ENCODE measurements at regions of chr6 and their contacts with region 1.

Region 1: DNA sequence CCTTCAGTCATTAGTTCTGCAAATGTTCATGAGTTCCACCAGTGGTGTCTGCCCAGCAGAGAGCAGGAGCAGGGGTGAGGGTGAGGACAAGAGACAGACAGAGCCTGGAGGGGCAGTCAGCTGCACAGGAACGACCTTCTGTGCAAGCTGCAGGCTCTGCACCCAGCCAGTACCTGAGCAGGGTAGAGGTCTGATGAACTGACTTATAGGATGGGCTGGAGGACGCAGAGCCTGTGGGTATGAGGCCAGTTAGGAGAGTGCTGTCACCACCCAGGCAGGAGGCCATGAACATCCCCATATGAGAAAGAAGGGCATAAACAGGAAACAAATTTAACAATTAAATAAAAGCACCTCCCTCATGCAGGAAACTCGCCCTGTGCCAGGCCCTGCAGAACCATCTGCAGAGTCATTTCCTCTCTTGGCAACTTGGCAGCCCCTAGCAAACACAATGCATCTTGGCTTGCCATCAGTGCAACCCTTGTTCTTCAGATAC is 17.9 kb downstream of the C6orf15 start:
- DNase-seq: peak in 8 of 9 experiments; percentile 40 to 82 (median 56)
- ATAC-seq: peak; percentile 85
- H3K4me3 ChIP-seq: peak overlapping the region; percentile 5 to 34
- H3K4me3 Mint-ChIP-seq: peak overlapping the region; percentile 72
- H3K27ac ChIP-seq: peak overlapping the region; percentile 49 to 64
- H3K27ac Mint-ChIP-seq: peak overlapping the region; percentile 98
- H3K4me1 ChIP-seq: peaks cover 42% of the 10 kb centered on the region
- H3K4me1 Mint-ChIP-seq: peaks cover 46% of the 10 kb centered on the region
- H3K27me3 ChIP-seq: no peaks in the 10 kb centered on the region
- H3K27me3 Mint-ChIP-seq: no peaks in the 10 kb centered on the region
- CTCF ChIP-seq: no peak

Region 2: GRCh38 chr6:30914076-30914853 is 180.2 kb before region 1 on chr6 and contains the start of gene VARS2:
- CTCF ChIA-PET with region 1: interaction called, 18 read pairs
- POLR2A ChIA-PET with region 1: no interaction called
- intact Hi-C with region 1: no loop called
- DNase-seq: peak; percentile 66 to 92 (median 82)
- ATAC-seq: peak; percentile 96
- H3K4me3 ChIP-seq: peak within 1 kb of the TSS; percentile 61 to 92
- H3K4me3 Mint-ChIP-seq: peak within 1 kb of the TSS; percentile 93
- H3K27ac ChIP-seq: peak within 1 kb of the TSS; percentile 48 to 65
- H3K27ac Mint-ChIP-seq: peak within 1 kb of the TSS; percentile 88
- H3K4me1 ChIP-seq: peaks cover 15% of the 10 kb centered on the region
- H3K4me1 Mint-ChIP-seq: peaks cover 29% of the 10 kb centered on the region
- H3K27me3 ChIP-seq: no peaks in the 10 kb centered on the region
- H3K27me3 Mint-ChIP-seq: no peaks in the 10 kb centered on the region
- CTCF ChIP-seq: no peak
- total RNA-seq, gene VARS2: 19.5 to 20.6 TPM

Region 3: GRCh38 chr6:30990422-30991086 is 103.9 kb before region 1 on chr6:
- CTCF ChIA-PET with region 1: no interaction called
- POLR2A ChIA-PET with region 1: no interaction called
- intact Hi-C with region 1: no loop called
- DNase-seq: peak in 3 of 9 experiments; percentile 16 to 58 (median 32)
- ATAC-seq: peak; percentile 73
- H3K4me3 ChIP-seq: peak overlapping the region; percentile 13 to 18
- H3K4me3 Mint-ChIP-seq: peak overlapping the region; percentile 76
- H3K27ac ChIP-seq: no peak overlapping the region
- H3K27ac Mint-ChIP-seq: no peak overlapping the region
- H3K4me1 ChIP-seq: no peaks in the 10 kb centered on the region
- H3K4me1 Mint-ChIP-seq: peaks cover 10% of the 10 kb centered on the region
- H3K27me3 ChIP-seq: no peaks in the 10 kb centered on the region
- H3K27me3 Mint-ChIP-seq: no peaks in the 10 kb centered on the region
- CTCF ChIP-seq: no peak

Region 4: GRCh38 chr6:31114970-31115849 is 20.8 kb after region 1 on chr6:
- CTCF ChIA-PET with region 1: interaction called, 16 read pairs
- POLR2A ChIA-PET with region 1: interaction called, 3 read pairs
- intact Hi-C with region 1: no loop called
- DNase-seq: peak in 1 of 9 experiments; percentile 46
- ATAC-seq: peak; percentile 29
- H3K4me3 ChIP-seq: no peak overlapping the region
- H3K4me3 Mint-ChIP-seq: no peak overlapping the region
- H3K27ac ChIP-seq: no peak overlapping the region
- H3K27ac Mint-ChIP-seq: no peak overlapping the region
- H3K4me1 ChIP-seq: no peaks in the 10 kb centered on the region
- H3K4me1 Mint-ChIP-seq: peaks cover 3% of the 10 kb centered on the region
- H3K27me3 ChIP-seq: no peaks in the 10 kb centered on the region
- H3K27me3 Mint-ChIP-seq: peaks cover 11% of the 10 kb centered on the region
- CTCF ChIP-seq: no peak

Measured in CD8-positive, alpha-beta T cell (primary cell).